ENCODE measurements at regions of chr4 and their contacts with region 1.

Region 1: GRCh38 chr4:113106108-113106507 is 56.7 kb downstream of the ANK2 start:
- DNase-seq: no peak
- H3K4me3 Mint-ChIP-seq: no peak overlapping the region
- H3K27ac Mint-ChIP-seq: no peak overlapping the region
- H3K4me1 Mint-ChIP-seq: no peaks in the 10 kb centered on the region
- H3K27me3 Mint-ChIP-seq: no peaks in the 10 kb centered on the region

Region 2: GRCh38 chr4:113636438-113636818 is 530.3 kb after region 1 on chr4:
- intact Hi-C with region 1: no loop called
- DNase-seq: no peak
- H3K4me3 Mint-ChIP-seq: peak overlapping the region; percentile 64
- H3K27ac Mint-ChIP-seq: peak overlapping the region; percentile 87
- H3K4me1 Mint-ChIP-seq: peaks cover 54% of the 10 kb centered on the region
- H3K27me3 Mint-ChIP-seq: no peaks in the 10 kb centered on the region

Region 3: DNA sequence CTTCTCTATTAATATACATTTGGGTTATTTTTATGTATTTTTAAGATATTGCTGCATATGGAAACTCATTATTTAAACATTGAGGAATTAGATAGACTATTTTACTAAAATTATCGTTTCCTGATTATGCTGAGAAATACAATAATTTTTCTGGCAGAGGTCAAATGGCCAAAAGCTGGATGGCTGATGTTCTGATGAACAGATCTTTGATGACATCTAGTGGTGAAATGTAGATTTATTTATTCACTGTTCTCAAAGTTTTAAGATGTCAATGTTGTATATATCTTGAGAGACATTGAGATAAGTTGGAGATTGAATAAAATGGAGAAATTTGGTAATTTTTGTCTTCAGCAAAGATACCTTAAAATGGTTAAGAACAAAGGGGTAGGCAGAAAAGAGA is 1588.7 kb after region 1 on chr4:
- intact Hi-C with region 1: loop called (anchors 5 kb)
- DNase-seq: no peak
- H3K4me3 Mint-ChIP-seq: no peak overlapping the region
- H3K27ac Mint-ChIP-seq: no peak overlapping the region
- H3K4me1 Mint-ChIP-seq: peaks cover 8% of the 10 kb centered on the region
- H3K27me3 Mint-ChIP-seq: no peaks in the 10 kb centered on the region